Heart right ventricle (tissue), 16 donors: ENCODE measurements at regions of chr6 and their contacts with region 1.

Region 1: DNA sequence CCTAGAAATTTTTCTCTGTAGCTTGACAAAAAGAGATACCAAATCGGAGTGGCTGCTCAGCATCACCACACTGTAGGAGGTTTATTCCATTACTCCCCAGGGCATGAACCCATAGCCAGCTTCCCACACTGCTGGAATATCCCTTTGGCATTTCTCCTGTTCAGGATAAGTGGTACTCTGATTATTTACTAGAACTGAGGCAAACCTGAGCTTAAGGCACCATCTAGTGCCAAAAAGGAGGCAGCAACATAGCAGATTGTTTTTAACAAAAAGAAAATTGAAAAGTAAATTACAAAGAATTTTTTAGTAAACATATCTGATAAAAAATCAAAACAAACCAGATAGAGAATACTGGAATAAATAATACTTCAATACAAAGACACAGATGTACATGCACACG is 181.7 kb downstream of the WDR27 start:
- DNase-seq: no peak
- ATAC-seq: peak in 1 of 8 donors; percentile 44
- H3K4me3 ChIP-seq: no peak overlapping the region
- H3K27ac ChIP-seq: no peak overlapping the region
- H3K4me1 ChIP-seq: no peaks in the 10 kb centered on the region
- H3K27me3 ChIP-seq: no peaks in the 10 kb centered on the region
- CTCF ChIP-seq: peak in 6 of 9 donors; percentile 23 to 59 (median 52)

Region 2: GRCh38 chr6:168895102-168895812 is 624.8 kb before region 1 on chr6:
- intact Hi-C with region 1: loop called in 3 of 10 experiments (anchors 5 to 10 kb)
- DNase-seq: peak; percentile 75 to 79
- ATAC-seq: peak; percentile 77 to 87 (median 82)
- H3K4me3 ChIP-seq: peak overlapping the region in 4 of 10 donors; percentile 5 to 28 (median 16)
- H3K27ac ChIP-seq: no peak overlapping the region
- H3K4me1 ChIP-seq: peaks cover 0 to 16% (median 0%) of the 10 kb centered on the region in 9 donors
- H3K27me3 ChIP-seq: peaks cover 0 to 5% (median 0%) of the 10 kb centered on the region in 7 donors
- CTCF ChIP-seq: peak; percentile 67 to 95 (median 90)

Region 3: GRCh38 chr6:168903613-168904345 is 616.3 kb before region 1 on chr6:
- intact Hi-C with region 1: loop called in 3 of 10 experiments (anchors 5 to 10 kb)
- DNase-seq: no peak
- ATAC-seq: no peak
- H3K4me3 ChIP-seq: no peak overlapping the region
- H3K27ac ChIP-seq: no peak overlapping the region
- H3K4me1 ChIP-seq: no peaks in the 10 kb centered on the region
- H3K27me3 ChIP-seq: peaks cover 0 to 9% (median 0%) of the 10 kb centered on the region in 7 donors
- CTCF ChIP-seq: no peak

Region 4: DNA sequence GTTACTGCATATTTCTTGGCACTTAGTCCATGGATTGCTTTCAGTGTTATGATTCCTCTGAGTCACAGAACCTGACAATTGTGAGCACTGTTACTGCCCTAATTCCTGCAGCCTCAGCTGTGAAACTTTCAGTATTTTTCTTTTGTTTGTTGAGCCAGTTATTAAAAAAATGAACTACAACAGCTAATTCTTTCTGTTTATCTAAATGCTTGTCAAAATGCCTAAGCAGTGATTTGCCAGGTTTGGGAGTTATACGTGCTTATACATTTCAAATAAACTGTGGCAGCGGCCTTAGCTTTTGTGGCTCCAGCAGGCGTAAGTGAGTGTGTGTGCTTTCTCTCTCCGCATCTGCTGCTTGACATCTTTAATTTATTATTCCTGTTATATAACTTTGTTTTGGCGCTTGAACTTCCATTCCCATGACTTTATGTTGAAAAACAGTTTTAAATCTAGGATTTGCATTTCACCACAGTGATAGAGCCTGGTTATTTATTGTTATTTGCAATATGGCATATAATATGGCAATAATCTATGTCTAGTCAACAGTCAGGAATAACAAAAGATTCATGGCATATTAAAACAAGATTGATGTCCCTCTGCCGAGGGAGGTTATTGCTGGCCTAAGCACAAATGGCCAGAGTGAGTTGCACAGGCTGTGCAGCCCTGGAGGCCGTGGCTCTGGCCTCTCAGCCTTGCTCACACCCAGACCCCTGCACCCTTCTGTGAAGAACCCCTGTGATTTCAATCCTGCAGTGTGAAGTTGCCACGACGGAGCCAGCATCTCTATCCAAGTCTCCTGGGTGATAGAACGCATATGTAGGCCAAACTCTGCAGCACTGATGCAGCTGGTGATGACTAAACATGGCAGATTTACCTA is 569.9 kb before region 1 on chr6:
- intact Hi-C with region 1: loop called in 7 of 10 experiments (anchors 5 to 10 kb)
- DNase-seq: peak in 1 of 2 donors; percentile 11
- ATAC-seq: peak in 5 of 8 donors; percentile 17 to 63 (median 49)
- H3K4me3 ChIP-seq: no peak overlapping the region
- H3K27ac ChIP-seq: no peak overlapping the region
- H3K4me1 ChIP-seq: peaks cover 0 to 4% (median 0%) of the 10 kb centered on the region in 9 donors
- H3K27me3 ChIP-seq: peaks cover 0 to 27% (median 5%) of the 10 kb centered on the region in 7 donors
- CTCF ChIP-seq: no peak

Region 5: GRCh38 chr6:169363590-169363989 is 156.5 kb before region 1 on chr6:
- intact Hi-C with region 1: no loop called
- DNase-seq: no peak
- ATAC-seq: no peak
- H3K4me3 ChIP-seq: no peak overlapping the region
- H3K27ac ChIP-seq: no peak overlapping the region
- H3K4me1 ChIP-seq: no peaks in the 10 kb centered on the region
- H3K27me3 ChIP-seq: no peaks in the 10 kb centered on the region
- CTCF ChIP-seq: no peak

Region 6: GRCh38 chr6:169556758-169557548 is 36.8 kb after region 1 on chr6:
- intact Hi-C with region 1: no loop called
- DNase-seq: no peak
- ATAC-seq: no peak
- H3K4me3 ChIP-seq: no peak overlapping the region
- H3K27ac ChIP-seq: no peak overlapping the region
- H3K4me1 ChIP-seq: no peaks in the 10 kb centered on the region
- H3K27me3 ChIP-seq: no peaks in the 10 kb centered on the region
- CTCF ChIP-seq: no peak

Region 7: DNA sequence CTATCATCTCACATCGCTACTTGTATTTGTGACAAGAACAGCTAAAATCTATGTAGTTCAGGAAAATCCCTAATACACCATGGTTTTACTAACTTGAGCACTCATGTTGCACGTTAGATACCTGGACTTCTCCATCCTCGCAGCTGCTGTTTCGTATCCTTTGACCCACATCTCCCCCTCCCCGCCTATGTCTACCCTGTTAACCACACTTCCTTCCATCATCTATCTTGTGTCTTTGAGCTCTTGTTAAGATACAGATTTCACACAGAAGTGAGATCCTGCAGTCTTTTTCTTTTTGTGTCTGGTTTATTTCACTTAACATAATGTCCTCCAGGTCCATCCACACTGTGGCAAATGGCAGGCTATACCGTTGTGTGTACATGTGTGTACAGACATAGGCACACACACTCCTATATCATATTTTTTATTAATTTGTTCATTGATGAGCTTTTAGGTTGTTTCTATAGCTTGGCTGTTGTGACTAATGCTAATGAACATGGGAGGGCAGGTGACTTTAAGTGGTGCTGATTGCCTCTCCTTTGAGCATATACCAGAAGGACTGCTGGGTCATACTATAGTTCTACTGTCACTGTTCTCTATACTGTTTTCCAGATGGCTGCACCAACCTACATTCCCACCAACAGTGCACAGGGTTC is 63.9 kb after region 1 on chr6:
- intact Hi-C with region 1: no loop called
- DNase-seq: no peak
- ATAC-seq: no peak
- H3K4me3 ChIP-seq: no peak overlapping the region
- H3K27ac ChIP-seq: no peak overlapping the region
- H3K4me1 ChIP-seq: peaks cover 0 to under 1% (median 0%) of the 10 kb centered on the region in 9 donors
- H3K27me3 ChIP-seq: no peaks in the 10 kb centered on the region
- CTCF ChIP-seq: no peak